ENCODE measurements at regions of chr10 and their contacts with region 1.

Region 1: DNA sequence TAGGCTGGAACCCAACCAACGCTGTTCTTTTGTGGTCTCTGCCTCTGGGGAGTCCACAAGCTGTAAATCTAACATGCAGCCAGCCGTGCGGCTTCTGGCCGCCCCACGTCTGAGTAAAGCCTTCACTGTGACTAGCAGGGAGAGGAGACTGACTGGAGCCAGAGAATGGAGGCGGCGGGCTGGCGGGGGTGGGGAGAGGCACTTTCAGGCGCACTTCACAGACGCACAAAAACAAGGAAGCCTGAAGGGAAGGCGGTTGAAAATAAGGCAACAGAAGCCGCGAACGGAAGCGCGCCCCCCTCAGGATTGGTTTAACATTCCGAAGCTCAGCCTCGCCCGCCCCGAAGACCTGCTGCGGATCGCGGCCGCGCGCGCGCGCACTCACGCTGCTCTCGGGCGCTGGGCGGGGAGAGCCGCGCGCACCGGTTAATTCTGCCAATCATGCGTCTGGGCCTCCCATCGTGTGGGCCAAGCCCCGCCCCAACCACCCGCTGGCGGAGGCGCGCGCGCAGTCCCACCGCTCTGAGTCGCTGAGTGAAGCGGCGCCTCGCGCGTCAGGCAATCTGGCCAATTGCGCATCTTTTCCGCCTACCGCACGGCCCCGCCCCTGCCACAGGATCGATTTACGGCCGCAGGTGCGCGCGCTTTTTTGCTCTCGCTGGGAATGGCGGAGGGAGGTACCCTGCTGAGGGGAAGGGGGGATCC is at the start of gene SFR1:
- DNase-seq: peak; percentile 93
- ATAC-seq: peak; percentile 93
- H3K4me3 ChIP-seq: peak within 1 kb of the TSS; percentile 98
- H3K27ac ChIP-seq: peak within 1 kb of the TSS; percentile 94
- H3K4me1 ChIP-seq: peaks cover 11% of the 10 kb centered on the region; the same call in 1 of the 2 replicates
- H3K27me3 ChIP-seq: no peaks in the 10 kb centered on the region; a peak in 1 of 4 replicates
- CTCF ChIP-seq: peak; percentile 56 to 81 (median 64); a peak in 5 of 6 replicates
- EP300 ChIP-seq: 0 out of 4 replicates have a peak, but pooled peaks of 1 of the 2 experiments have one; percentile 3
- POLR2A ChIP-seq: peak; percentile 87
- RAD21 ChIP-seq: 0 out of 2 replicates have a peak, but pooled peaks have one; percentile 20
- polyA plus RNA-seq, gene SFR1: 25.4 to 31.5 TPM

Region 2: GRCh38 chr10:103517234-103518085 is 604.2 kb before region 1 on chr10:
- CTCF ChIA-PET with region 1: no interaction called
- POLR2A ChIA-PET with region 1: no interaction called
- RAD21 ChIA-PET with region 1: no interaction called
- SMC1A ChIA-PET with region 1: no interaction called
- in situ Hi-C with region 1: no loop called
- intact Hi-C with region 1: no loop called
- DNase-seq: no peak
- ATAC-seq: no peak
- H3K4me3 ChIP-seq: no peak overlapping the region
- H3K27ac ChIP-seq: no peak overlapping the region
- H3K4me1 ChIP-seq: peaks cover 10% of the 10 kb centered on the region
- H3K27me3 ChIP-seq: no peaks in the 10 kb centered on the region
- CTCF ChIP-seq: no peak
- EP300 ChIP-seq: no peak
- POLR2A ChIP-seq: no peak
- RAD21 ChIP-seq: no peak

Region 3: GRCh38 chr10:103870516-103870915 is 251.2 kb before region 1 on chr10:
- CTCF ChIA-PET with region 1: no interaction called
- POLR2A ChIA-PET with region 1: no interaction called
- RAD21 ChIA-PET with region 1: no interaction called
- SMC1A ChIA-PET with region 1: no interaction called
- in situ Hi-C with region 1: no loop called
- intact Hi-C with region 1: no loop called
- DNase-seq: no peak
- ATAC-seq: no peak
- H3K4me3 ChIP-seq: no peak overlapping the region
- H3K27ac ChIP-seq: no peak overlapping the region
- H3K4me1 ChIP-seq: no peaks in the 10 kb centered on the region
- H3K27me3 ChIP-seq: no peaks in the 10 kb centered on the region
- CTCF ChIP-seq: no peak
- EP300 ChIP-seq: no peak
- POLR2A ChIP-seq: no peak
- RAD21 ChIP-seq: no peak

Region 4: GRCh38 chr10:103888113-103888841 is 233.4 kb before region 1 on chr10:
- CTCF ChIA-PET with region 1: interaction called, 151 read pairs
- POLR2A ChIA-PET with region 1: no interaction called
- RAD21 ChIA-PET with region 1: interaction called, 46 read pairs
- SMC1A ChIA-PET with region 1: interaction called, 28 read pairs
- in situ Hi-C with region 1: no loop called
- intact Hi-C with region 1: loop called (anchors 1 kb)
- DNase-seq: no peak
- ATAC-seq: peak; percentile 86
- H3K4me3 ChIP-seq: no peak overlapping the region
- H3K27ac ChIP-seq: no peak overlapping the region
- H3K4me1 ChIP-seq: no peaks in the 10 kb centered on the region
- H3K27me3 ChIP-seq: no peaks in the 10 kb centered on the region
- CTCF ChIP-seq: peak; percentile 83 to 95 (median 91); a peak in 5 of 6 replicates
- EP300 ChIP-seq: no peak
- POLR2A ChIP-seq: no peak
- RAD21 ChIP-seq: peak; percentile 87

Region 5: DNA sequence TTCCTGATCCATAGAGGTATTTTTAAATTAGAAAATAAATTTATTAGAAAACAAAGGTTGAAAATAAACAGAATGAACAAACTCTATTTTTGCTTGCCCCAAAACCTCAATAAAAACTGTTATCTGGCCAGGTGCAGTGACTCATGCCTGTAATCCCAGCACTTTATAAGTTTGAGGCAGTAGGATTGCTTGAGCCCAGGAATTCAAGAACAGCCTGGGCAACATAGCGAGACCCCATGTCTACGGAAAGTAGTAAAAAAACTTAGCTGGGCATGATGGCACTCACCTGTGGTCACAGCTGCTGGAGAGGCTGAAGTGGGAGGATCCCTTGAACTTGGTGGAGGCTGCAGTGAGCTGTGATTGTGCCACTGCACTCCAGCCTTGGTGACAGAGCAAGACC is 144.5 kb before region 1 on chr10:
- CTCF ChIA-PET with region 1: interaction called, 46 read pairs
- POLR2A ChIA-PET with region 1: interaction called, 10 read pairs
- RAD21 ChIA-PET with region 1: interaction called, 38 read pairs
- SMC1A ChIA-PET with region 1: interaction called, 22 read pairs
- in situ Hi-C with region 1: no loop called
- intact Hi-C with region 1: loop called (anchors 5 kb)
- DNase-seq: no peak
- ATAC-seq: peak; percentile 45; the same call in 2 of the 3 replicates
- H3K4me3 ChIP-seq: no peak overlapping the region
- H3K27ac ChIP-seq: no peak overlapping the region
- H3K4me1 ChIP-seq: no peaks in the 10 kb centered on the region; the same call in 1 of the 2 replicates
- H3K27me3 ChIP-seq: no peaks in the 10 kb centered on the region
- CTCF ChIP-seq: no peak
- EP300 ChIP-seq: no peak
- POLR2A ChIP-seq: no peak
- RAD21 ChIP-seq: no peak

Region 6: DNA sequence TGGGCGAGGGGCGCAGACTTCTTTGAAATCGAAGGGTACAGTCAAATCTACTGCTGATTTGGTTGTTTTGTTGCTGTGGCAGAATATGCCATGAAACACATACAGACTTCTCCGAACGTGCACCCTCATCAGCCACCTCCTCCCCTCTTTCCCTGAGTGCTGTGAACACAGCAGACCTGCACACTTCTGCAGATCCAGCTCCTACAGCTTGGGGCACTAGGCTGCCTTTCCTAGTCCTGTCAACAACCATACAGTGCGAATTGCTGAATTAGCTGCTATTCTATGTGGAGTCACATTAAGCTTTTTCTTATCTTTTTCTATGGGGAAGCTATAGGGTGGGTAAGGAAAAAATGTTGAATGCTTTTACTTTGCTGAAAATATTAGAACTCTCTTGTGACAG is 93.5 kb before region 1 on chr10:
- CTCF ChIA-PET with region 1: interaction called, 15 read pairs
- POLR2A ChIA-PET with region 1: no interaction called
- RAD21 ChIA-PET with region 1: interaction called, 7 read pairs
- SMC1A ChIA-PET with region 1: interaction called, 6 read pairs
- in situ Hi-C with region 1: no loop called
- intact Hi-C with region 1: loop called (anchors 5 kb)
- DNase-seq: no peak
- ATAC-seq: peak; percentile 66; the same call in 2 of the 3 replicates
- H3K4me3 ChIP-seq: no peak overlapping the region
- H3K27ac ChIP-seq: no peak overlapping the region
- H3K4me1 ChIP-seq: no peaks in the 10 kb centered on the region
- H3K27me3 ChIP-seq: no peaks in the 10 kb centered on the region
- CTCF ChIP-seq: peak in 2 of 3 experiments; percentile 9 to 29; a peak in 2 of 6 replicates
- EP300 ChIP-seq: no peak
- POLR2A ChIP-seq: no peak
- RAD21 ChIP-seq: peak; percentile 11; the same call in 1 of the 2 replicates

Region 7: GRCh38 chr10:104104926-104105325 is 16.7 kb before region 1 on chr10:
- CTCF ChIA-PET with region 1: interaction called, 47 read pairs
- POLR2A ChIA-PET with region 1: interaction called, 36 read pairs
- RAD21 ChIA-PET with region 1: interaction called, 38 read pairs
- SMC1A ChIA-PET with region 1: interaction called, 58 read pairs
- in situ Hi-C with region 1: no loop called
- intact Hi-C with region 1: no loop called
- DNase-seq: no peak
- ATAC-seq: no peak
- H3K4me3 ChIP-seq: no peak overlapping the region
- H3K27ac ChIP-seq: no peak overlapping the region
- H3K4me1 ChIP-seq: no peaks in the 10 kb centered on the region
- H3K27me3 ChIP-seq: no peaks in the 10 kb centered on the region
- CTCF ChIP-seq: no peak
- EP300 ChIP-seq: no peak
- POLR2A ChIP-seq: no peak
- RAD21 ChIP-seq: no peak

Region 8: DNA sequence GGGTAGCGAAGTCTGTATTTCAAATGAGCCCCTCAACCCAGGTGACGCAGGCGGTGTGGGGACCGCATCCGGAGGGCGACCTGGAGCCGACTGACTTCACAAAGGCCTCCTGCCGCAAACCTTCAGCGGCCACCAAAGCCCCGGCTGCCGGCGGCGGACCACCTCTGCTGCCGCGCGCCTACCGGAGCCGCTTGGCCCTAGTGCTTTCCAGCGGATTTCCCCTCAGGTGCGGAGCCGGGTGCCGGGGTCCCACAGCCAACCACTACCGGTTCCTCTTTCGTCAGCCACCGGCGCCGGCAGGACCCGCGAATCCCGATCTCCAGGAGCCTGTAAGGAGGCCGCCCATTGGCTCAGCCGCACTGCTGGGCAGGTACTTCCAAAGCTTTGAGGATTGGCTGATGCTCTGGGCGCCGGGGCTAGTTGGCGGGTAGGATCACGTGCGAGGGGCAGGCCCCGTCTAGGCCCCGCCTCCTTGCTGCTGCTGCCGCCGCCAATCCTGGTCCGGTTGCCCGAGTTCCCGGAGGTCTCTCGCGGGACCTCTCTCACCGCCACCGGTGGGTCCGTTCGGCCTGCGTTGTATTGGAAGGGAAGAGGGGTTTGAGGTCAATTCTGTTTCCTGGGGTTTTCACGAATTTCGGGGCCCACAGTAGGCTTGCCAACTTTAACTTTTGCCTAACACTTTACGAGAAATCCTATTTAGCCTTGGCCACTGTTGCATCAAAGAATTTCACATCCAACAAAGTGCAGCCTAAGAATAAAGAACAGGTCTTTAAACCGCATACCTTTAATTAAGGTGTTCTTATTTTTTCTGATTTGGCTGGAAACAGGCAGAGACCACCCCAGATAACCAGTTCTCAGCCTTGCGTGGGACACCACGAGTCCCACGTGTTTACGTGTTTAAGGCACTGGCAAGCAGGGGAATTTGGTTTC is 147.3 kb after region 1 on chr10 and contains the start of gene GSTO2:
- CTCF ChIA-PET with region 1: interaction called, 15 read pairs
- POLR2A ChIA-PET with region 1: no interaction called
- RAD21 ChIA-PET with region 1: interaction called, 5 read pairs
- SMC1A ChIA-PET with region 1: no interaction called
- in situ Hi-C with region 1: no loop called
- intact Hi-C with region 1: loop called (anchors 5 kb)
- DNase-seq: peak; percentile 90
- ATAC-seq: peak; percentile 98
- H3K4me3 ChIP-seq: peak within 1 kb of the TSS; percentile 73
- H3K27ac ChIP-seq: peak within 1 kb of the TSS; percentile 80
- H3K4me1 ChIP-seq: 0 out of 2 replicates have a peak, but pooled peaks cover 3% of the 10 kb centered on the region
- H3K27me3 ChIP-seq: no peaks in the 10 kb centered on the region
- CTCF ChIP-seq: no peak
- EP300 ChIP-seq: no peak
- POLR2A ChIP-seq: peak; percentile 92
- RAD21 ChIP-seq: no peak
- polyA plus RNA-seq, gene GSTO2: 0.16 to 0.53 TPM

Measured in GM12878 (cell line).